B cell (primary cell): ENCODE measurements at regions of chr18 and their contacts with region 1.

Region 1: DNA sequence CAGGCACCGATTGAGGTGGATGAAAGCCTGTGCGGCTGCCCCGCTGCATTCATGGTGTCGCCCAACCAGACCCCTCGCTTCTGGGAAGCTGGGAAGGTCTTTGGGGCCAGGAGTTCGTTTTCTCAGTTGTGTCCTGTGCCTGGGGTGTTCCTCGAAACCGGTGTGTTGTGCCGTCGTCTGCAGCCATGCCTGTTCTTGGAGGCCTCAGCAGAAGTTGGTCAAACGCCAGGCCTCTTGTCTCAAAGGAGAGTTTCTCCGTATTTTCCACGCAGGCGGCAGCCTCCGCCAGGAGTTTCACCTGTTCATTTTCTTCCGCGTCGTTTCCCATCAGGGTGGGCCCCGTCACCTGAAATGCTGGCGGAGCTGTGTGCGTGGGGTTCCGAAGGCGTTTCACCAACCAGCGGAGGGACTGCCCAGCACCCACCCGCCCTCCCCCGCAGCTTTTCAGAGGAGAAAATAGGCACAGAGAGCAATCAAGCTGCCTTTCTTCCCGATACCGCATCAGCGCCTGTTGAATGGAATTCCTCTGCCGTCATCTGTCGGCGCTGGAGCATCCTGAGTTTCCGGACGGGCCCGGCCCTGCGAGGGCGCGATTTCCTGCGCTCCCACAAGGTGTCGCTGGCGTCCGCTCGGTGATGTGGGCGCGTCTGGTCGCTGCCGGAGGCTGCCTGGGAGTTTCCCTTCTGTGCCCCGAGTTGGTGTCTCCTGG is 17.0 kb upstream of the NFATC1 start:
- DNase-seq: peak; percentile 88
- ATAC-seq: peak; percentile 68
- H3K4me3 ChIP-seq: no peak overlapping the region
- H3K4me3 Mint-ChIP-seq: no peak overlapping the region
- H3K27ac ChIP-seq: no peak overlapping the region
- H3K27ac Mint-ChIP-seq: peak overlapping the region; percentile 27
- H3K4me1 ChIP-seq: peaks cover 14 to 22% of the 10 kb centered on the region in 2 donors
- H3K4me1 Mint-ChIP-seq: peaks cover 20% of the 10 kb centered on the region
- H3K27me3 ChIP-seq: no peaks in the 10 kb centered on the region
- H3K27me3 Mint-ChIP-seq: no peaks in the 10 kb centered on the region
- CTCF ChIP-seq: peak; percentile 89

Region 2: GRCh38 chr18:79227621-79228020 is 151.1 kb before region 1 on chr18:
- CTCF ChIA-PET with region 1: no interaction called
- POLR2A ChIA-PET with region 1: no interaction called
- intact Hi-C with region 1: no loop called
- DNase-seq: no peak
- ATAC-seq: no peak
- H3K4me3 ChIP-seq: no peak overlapping the region
- H3K4me3 Mint-ChIP-seq: no peak overlapping the region
- H3K27ac ChIP-seq: no peak overlapping the region
- H3K27ac Mint-ChIP-seq: no peak overlapping the region
- H3K4me1 ChIP-seq: no peaks in the 10 kb centered on the region
- H3K4me1 Mint-ChIP-seq: peaks cover 3% of the 10 kb centered on the region
- H3K27me3 ChIP-seq: no peaks in the 10 kb centered on the region
- H3K27me3 Mint-ChIP-seq: no peaks in the 10 kb centered on the region
- CTCF ChIP-seq: no peak

Region 3: DNA sequence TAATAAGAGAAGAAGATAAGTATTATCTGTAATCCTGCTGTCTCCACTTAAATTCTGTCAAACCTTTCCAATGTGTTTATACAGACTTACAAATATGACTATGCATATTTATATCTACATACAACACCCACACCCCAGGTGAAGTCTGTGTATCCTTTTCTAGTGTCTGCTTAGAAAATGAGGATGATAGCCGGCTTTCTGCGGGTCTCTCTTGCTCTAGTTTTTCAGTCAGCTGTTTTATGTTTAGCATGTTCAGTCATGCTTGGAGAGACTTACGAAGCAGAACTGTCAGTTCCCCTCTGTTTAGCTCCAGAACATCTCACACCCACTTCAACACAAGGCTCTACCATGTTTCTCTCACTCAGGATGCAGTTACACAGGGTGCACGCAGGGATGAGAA is 120.2 kb before region 1 on chr18:
- CTCF ChIA-PET with region 1: no interaction called
- POLR2A ChIA-PET with region 1: no interaction called
- intact Hi-C with region 1: no loop called
- DNase-seq: peak; percentile 20
- ATAC-seq: peak; percentile 31
- H3K4me3 ChIP-seq: no peak overlapping the region
- H3K4me3 Mint-ChIP-seq: no peak overlapping the region
- H3K27ac ChIP-seq: no peak overlapping the region
- H3K27ac Mint-ChIP-seq: no peak overlapping the region
- H3K4me1 ChIP-seq: peaks cover 0 to 7% of the 10 kb centered on the region in 2 donors
- H3K4me1 Mint-ChIP-seq: peaks cover 18% of the 10 kb centered on the region
- H3K27me3 ChIP-seq: no peaks in the 10 kb centered on the region
- H3K27me3 Mint-ChIP-seq: no peaks in the 10 kb centered on the region
- CTCF ChIP-seq: no peak

Region 4: GRCh38 chr18:79326413-79327198 is 52.1 kb before region 1 on chr18:
- CTCF ChIA-PET with region 1: no interaction called
- POLR2A ChIA-PET with region 1: no interaction called
- intact Hi-C with region 1: no loop called
- DNase-seq: no peak
- ATAC-seq: no peak
- H3K4me3 ChIP-seq: no peak overlapping the region
- H3K4me3 Mint-ChIP-seq: no peak overlapping the region
- H3K27ac ChIP-seq: no peak overlapping the region
- H3K27ac Mint-ChIP-seq: no peak overlapping the region
- H3K4me1 ChIP-seq: no peaks in the 10 kb centered on the region
- H3K4me1 Mint-ChIP-seq: no peaks in the 10 kb centered on the region
- H3K27me3 ChIP-seq: no peaks in the 10 kb centered on the region
- H3K27me3 Mint-ChIP-seq: no peaks in the 10 kb centered on the region
- CTCF ChIP-seq: no peak

Region 5: DNA sequence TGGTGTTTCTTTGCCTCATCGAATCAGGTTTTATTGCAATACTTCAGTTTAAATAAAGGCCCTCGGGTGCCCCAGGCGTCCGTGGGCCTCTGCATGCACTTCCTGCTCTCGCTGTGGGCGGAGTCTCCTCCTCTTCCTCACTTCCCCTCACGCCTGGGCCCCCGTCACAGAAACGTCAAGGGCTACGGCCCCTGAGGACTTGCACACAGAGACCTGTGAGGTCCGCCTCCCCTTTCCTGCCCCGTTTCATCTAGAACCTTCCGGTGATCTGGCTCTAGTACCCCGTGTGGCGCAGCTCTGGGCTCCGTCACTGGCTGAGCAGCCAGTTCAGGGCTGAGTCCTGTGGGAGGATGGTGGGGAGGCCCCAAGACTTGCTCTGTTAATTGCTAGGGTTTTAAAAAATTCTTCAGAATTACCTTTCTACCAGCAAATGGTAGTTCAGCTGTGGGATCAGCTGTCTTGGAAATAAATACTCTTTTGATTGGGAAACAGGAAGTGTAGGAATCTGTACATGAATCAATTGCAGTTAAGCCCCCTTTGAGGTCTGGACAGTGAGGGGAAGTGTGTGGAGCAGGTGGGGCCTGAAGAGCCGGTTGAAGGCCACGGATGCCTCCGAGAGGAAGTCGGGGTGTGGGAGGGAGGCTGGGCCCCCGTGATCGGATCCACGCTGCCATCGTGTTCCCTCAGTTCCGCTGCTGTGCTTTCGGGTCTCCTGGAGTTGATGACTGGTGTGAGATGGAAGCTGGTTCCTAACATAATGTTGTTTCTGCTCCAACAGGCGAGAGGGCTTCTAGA is 27.3 kb after region 1 on chr18:
- CTCF ChIA-PET with region 1: interaction called, 10 read pairs
- POLR2A ChIA-PET with region 1: no interaction called
- intact Hi-C with region 1: no loop called
- DNase-seq: peak; percentile 96
- ATAC-seq: peak; percentile 89
- H3K4me3 ChIP-seq: peak overlapping the region; percentile 19 to 45 (median 35)
- H3K4me3 Mint-ChIP-seq: peak overlapping the region; percentile 79
- H3K27ac ChIP-seq: peak overlapping the region; percentile 91 to 97
- H3K27ac Mint-ChIP-seq: peak overlapping the region; percentile 92
- H3K4me1 ChIP-seq: peaks cover 60 to 63% of the 10 kb centered on the region in 2 donors
- H3K4me1 Mint-ChIP-seq: peaks cover 71% of the 10 kb centered on the region
- H3K27me3 ChIP-seq: no peaks in the 10 kb centered on the region
- H3K27me3 Mint-ChIP-seq: no peaks in the 10 kb centered on the region
- CTCF ChIP-seq: no peak

Region 6: DNA sequence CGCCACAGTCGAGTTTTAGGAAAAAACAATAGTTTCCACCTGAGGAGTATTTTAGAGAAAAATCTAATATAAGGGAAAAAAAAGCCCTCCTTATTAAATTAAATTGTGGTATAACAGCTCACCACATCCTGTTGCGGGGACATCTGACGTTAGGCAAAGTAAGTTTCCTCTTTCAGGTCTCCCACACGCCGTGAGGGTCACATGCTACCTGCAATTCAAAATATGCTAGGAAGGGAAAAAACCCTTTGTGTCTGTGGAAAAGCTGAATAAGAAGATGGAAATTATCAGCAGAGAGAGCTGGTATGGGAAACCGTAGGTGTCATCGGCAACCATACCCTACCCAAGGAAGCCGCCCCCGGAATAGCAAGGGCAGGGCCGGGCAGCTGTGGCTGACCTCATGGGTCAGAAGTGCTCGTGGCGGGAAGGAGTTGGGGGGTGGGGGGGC is 145.1 kb after region 1 on chr18:
- CTCF ChIA-PET with region 1: interaction called, 201 read pairs
- POLR2A ChIA-PET with region 1: interaction called, 4 read pairs
- intact Hi-C with region 1: loop called (anchors 1 kb)
- DNase-seq: peak; percentile 92
- ATAC-seq: peak; percentile 57
- H3K4me3 ChIP-seq: peak overlapping the region in 4 of 5 experiments; percentile 37 to 46 (median 42)
- H3K4me3 Mint-ChIP-seq: peak overlapping the region; percentile 76
- H3K27ac ChIP-seq: peak overlapping the region; percentile 96
- H3K27ac Mint-ChIP-seq: peak overlapping the region; percentile 85
- H3K4me1 ChIP-seq: peaks cover 54 to 68% of the 10 kb centered on the region in 2 donors
- H3K4me1 Mint-ChIP-seq: peaks cover 67% of the 10 kb centered on the region
- H3K27me3 ChIP-seq: no peaks in the 10 kb centered on the region
- H3K27me3 Mint-ChIP-seq: no peaks in the 10 kb centered on the region
- CTCF ChIP-seq: no peak

Region 7: DNA sequence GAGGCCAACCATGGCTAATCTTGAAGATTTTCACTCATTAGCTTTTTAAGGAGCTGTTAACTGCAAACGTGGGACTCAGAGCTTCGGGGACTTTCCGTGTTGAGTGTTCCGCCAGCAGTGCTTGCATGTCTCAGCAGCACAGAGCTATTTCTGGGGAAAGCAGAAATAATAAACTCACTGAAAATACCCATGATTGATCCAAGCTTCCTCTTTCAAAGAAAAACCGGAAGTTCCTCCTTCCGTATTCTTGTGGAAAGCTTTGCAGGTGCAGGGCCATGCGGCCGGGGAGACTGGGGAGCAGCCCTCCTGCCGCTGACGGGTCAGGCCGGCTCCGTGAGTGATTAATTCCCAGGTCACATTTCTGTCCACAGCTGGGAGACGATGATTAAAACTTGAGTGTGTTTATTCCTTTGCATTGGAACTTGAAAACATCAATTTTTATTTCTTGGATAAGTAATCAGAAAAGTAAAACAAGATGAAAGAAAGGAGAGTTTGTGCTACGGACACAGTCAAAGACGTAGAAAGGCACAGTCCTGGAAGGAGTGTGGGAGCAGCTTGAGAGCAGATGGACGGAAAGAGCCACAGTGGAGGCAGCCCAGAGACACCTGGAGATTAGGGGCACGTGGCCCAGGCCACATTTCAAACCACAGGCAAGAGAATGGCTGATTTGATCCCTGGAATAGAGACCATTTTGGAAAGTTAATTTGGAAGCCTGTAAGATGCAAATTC is 246.7 kb after region 1 on chr18:
- CTCF ChIA-PET with region 1: interaction called, 28 read pairs
- POLR2A ChIA-PET with region 1: no interaction called
- intact Hi-C with region 1: no loop called
- DNase-seq: peak; percentile 85
- ATAC-seq: peak; percentile 83
- H3K4me3 ChIP-seq: peak overlapping the region in 4 of 5 experiments; percentile 0 to 46 (median 26)
- H3K4me3 Mint-ChIP-seq: peak overlapping the region; percentile 82
- H3K27ac ChIP-seq: peak overlapping the region; percentile 58 to 80
- H3K27ac Mint-ChIP-seq: peak overlapping the region; percentile 79
- H3K4me1 ChIP-seq: peaks cover 47 to 57% of the 10 kb centered on the region in 2 donors
- H3K4me1 Mint-ChIP-seq: peaks cover 53% of the 10 kb centered on the region
- H3K27me3 ChIP-seq: no peaks in the 10 kb centered on the region
- H3K27me3 Mint-ChIP-seq: no peaks in the 10 kb centered on the region
- CTCF ChIP-seq: no peak

Region 8: GRCh38 chr18:80157708-80158343 is 779.1 kb after region 1 on chr18:
- CTCF ChIA-PET with region 1: interaction called, 5 read pairs
- POLR2A ChIA-PET with region 1: no interaction called
- intact Hi-C with region 1: loop called (anchors 5 kb)
- DNase-seq: peak; percentile 77
- ATAC-seq: peak; percentile 70
- H3K4me3 ChIP-seq: no peak overlapping the region
- H3K4me3 Mint-ChIP-seq: no peak overlapping the region
- H3K27ac ChIP-seq: no peak overlapping the region
- H3K27ac Mint-ChIP-seq: no peak overlapping the region
- H3K4me1 ChIP-seq: peaks cover 3% of the 10 kb centered on the region in 2 donors
- H3K4me1 Mint-ChIP-seq: peaks cover 12% of the 10 kb centered on the region
- H3K27me3 ChIP-seq: peaks cover 0 to 8% (median 2%) of the 10 kb centered on the region in 4 experiments
- H3K27me3 Mint-ChIP-seq: no peaks in the 10 kb centered on the region
- CTCF ChIP-seq: peak; percentile 100